ENCODE measurements at regions of chr2 and their contacts with region 1.

Region 1: DNA sequence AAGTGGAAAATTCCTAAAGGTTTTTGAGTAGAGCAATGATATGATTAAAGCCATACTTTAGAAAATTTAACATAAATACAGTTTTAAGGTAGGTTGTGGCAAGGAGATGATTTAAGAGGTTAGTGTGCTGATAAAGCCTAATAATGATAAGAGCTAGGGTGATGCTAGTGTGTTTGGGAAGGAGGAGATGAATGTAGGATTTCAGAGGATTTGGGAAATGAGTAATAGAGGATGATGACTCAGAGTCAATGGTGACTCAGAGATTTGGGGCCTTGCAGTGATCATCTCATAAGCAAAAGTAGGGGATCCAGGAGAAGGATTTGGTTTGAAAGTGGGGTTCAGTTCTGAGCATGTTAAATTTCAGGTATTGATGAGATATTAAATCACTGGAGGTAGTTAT is 23.3 kb downstream of the STAMBP start:
- DNase-seq: no peak
- H3K4me3 Mint-ChIP-seq: no peak overlapping the region
- H3K27ac Mint-ChIP-seq: no peak overlapping the region
- H3K4me1 Mint-ChIP-seq: peaks cover 22% of the 10 kb centered on the region
- H3K27me3 Mint-ChIP-seq: no peaks in the 10 kb centered on the region

Region 2: GRCh38 chr2:73828818-73829570 is 23.0 kb before region 1 on chr2 and contains the start of gene STAMBP:
- intact Hi-C with region 1: no loop called
- DNase-seq: peak; percentile 98
- H3K4me3 Mint-ChIP-seq: peak within 1 kb of the TSS; percentile 97
- H3K27ac Mint-ChIP-seq: peak within 1 kb of the TSS; percentile 96
- H3K4me1 Mint-ChIP-seq: peaks cover 44% of the 10 kb centered on the region
- H3K27me3 Mint-ChIP-seq: peaks cover 2% of the 10 kb centered on the region
- total RNA-seq, gene STAMBP: 58.4 and 59.9 TPM in 2 replicates

Region 3: DNA sequence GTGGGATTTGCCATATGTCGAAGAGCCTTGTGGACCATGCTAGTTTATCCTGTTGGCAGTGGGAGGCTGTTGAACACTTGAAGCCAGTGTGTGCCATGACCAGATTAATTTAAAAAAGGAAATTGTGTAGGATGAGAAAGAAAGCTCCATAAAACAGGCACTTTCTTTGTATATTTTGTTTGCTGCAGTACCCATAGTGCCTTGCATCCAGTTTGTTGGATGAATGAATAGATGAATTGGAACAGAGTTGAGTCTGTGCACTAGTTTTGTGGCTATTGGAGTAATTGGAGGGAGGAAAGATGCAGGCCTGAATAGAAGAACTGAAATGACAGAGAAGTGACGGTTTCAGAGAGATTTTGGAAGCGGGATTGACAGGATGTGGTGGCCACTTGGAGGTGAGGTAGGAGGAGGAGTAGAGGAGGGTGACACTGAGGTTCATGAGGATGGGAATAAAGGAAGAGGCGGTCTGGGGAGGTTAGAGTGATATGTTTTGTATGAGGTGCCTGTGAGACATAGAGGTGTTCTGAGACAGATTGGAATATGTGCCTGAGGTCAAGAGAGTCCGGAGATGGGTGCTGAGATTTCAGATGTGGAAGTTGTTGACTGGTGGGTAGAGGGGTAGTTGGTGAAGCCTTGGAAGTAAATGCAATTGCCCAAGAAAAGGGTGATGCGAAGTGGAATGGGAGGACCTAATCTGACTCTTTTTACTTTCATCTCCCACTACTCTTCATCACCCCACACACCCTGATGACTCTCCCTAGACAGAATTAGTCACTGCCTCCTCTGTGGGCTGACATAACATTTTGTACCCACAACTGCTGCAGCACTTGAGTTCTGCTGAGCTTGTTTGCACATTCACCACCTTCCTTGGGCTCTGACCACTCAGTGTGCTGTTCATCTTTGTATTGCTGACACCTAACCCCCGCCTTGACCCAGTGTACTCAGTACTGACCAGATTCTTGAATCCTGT is 79.8 kb after region 1 on chr2:
- intact Hi-C with region 1: loop called (anchors 1 kb)
- DNase-seq: peak; percentile 72
- H3K4me3 Mint-ChIP-seq: peak overlapping the region; percentile 73
- H3K27ac Mint-ChIP-seq: peak overlapping the region; percentile 95
- H3K4me1 Mint-ChIP-seq: peaks cover 62% of the 10 kb centered on the region
- H3K27me3 Mint-ChIP-seq: no peaks in the 10 kb centered on the region

Measured in activated CD4-positive, alpha-beta T cell treated with anti-CD3 and anti-CD28 coated beads, Interleukin-2, amount 10 ng/mL, durations not matched to agents 24 days and 14 days (primary cell).